AG04450 (cell line): ENCODE measurements at regions of chr9 and their contacts with region 1.

Region 1: DNA sequence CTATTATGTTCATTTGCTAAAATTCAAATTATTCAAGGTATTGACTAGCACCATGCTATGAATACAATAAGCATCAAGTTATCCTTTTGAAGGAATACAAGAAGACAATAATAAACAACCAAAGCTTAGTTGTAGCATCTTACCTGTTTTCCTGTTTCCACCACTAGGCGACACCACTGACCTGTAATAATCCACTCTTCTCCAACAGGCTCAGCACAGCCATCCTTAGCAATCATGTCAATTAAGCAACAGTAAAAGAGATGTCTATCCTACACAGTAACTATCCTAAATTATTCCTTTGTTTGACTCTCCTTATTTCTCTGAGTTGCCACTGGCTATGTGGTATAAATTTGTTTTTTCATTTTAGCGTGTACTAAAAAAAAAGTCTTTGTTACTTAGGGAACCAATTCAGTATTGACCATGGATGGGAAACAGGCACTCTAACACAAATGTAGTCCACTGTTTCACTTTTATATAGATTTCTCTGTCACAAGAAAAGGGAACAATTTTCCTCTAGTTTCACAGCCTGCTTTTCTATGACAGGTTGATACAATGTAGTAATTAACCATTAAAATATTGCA is 46.2 kb downstream of the PCA3 start:
- DNase-seq: peak; percentile 38
- H3K4me3 ChIP-seq: no peak overlapping the region
- H3K27ac ChIP-seq: no peak overlapping the region
- H3K27me3 ChIP-seq: no peaks in the 10 kb centered on the region
- CTCF ChIP-seq: peak; percentile 95

Region 2: GRCh38 chr9:75624998-75625397 is 1185.5 kb before region 1 on chr9:
- CTCF ChIA-PET with region 1: no interaction called
- POLR2A ChIA-PET with region 1: no interaction called
- DNase-seq: no peak
- H3K4me3 ChIP-seq: no peak overlapping the region
- H3K27ac ChIP-seq: no peak overlapping the region
- H3K27me3 ChIP-seq: no peaks in the 10 kb centered on the region
- CTCF ChIP-seq: no peak

Region 3: DNA sequence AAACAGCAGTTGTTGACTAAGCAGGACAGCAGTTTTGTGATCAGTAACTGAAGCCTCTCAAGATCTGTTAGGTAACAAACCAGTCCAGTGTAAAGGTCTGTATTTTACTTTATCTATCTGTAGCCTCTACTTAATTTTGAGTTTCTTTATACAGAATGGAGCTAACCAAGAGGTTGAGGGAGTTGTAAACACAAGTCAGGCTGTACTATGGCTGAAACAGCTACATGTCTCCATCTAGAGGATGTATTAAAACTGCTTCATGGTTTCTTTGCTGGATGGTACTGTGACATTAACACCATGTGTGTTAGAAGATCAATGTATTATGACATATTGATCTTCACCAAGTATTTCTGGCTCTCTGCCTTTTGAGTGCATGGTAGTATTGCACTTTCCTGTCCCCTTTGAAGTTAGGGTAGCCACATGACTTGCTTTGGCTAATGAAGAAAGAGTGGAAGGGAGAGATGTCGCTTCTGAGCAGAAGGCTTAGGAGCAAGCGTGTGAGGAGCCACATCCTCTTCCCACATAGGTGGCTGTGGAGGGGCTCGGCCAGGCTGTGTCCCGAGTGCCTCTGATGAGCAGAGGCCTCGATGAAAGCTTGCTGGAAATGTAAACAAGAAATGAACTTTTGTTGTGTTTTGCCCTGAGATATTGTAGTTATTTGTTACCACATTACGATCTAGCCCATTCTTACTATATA is 151.8 kb before region 1 on chr9:
- CTCF ChIA-PET with region 1: no interaction called
- POLR2A ChIA-PET with region 1: no interaction called
- DNase-seq: peak; percentile 43
- H3K4me3 ChIP-seq: no peak overlapping the region
- H3K27ac ChIP-seq: no peak overlapping the region
- H3K27me3 ChIP-seq: no peaks in the 10 kb centered on the region
- CTCF ChIP-seq: peak; percentile 79

Region 4: DNA sequence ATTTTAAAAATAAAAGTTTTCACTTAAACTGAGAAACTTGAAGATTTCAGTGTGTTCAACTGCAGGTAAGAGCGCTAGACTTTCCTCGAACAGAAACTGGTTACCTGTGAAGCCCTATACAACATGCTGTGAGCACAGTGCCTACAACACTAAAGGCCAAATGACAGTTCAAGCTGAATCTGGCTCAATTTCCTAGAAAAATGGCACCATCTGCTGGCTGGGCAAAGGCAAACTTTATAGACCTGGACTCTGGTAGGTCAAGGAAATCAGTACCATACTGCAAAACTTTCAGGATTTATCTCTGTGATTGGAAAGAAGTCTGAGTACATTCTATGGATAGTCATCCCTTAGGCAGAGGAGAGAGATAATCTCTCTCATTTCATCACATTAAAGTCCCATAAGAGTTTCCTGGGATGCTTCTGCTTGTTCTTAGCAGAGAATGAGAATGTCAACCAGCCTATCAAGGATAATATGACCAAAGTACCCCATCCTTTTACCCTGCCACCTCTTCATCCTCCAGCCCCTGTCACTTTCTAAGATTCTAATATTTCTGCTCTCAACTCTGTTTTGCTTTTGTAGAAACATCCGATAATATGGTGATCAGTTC is 177.2 kb after region 1 on chr9:
- CTCF ChIA-PET with region 1: interaction called, 110 read pairs
- POLR2A ChIA-PET with region 1: no interaction called
- DNase-seq: no peak
- H3K4me3 ChIP-seq: no peak overlapping the region
- H3K27ac ChIP-seq: no peak overlapping the region
- H3K27me3 ChIP-seq: no peaks in the 10 kb centered on the region
- CTCF ChIP-seq: peak; percentile 72

Region 5: GRCh38 chr9:76996700-76997099 is 186.2 kb after region 1 on chr9:
- CTCF ChIA-PET with region 1: interaction called, 94 read pairs
- POLR2A ChIA-PET with region 1: no interaction called
- DNase-seq: no peak
- H3K4me3 ChIP-seq: no peak overlapping the region
- H3K27ac ChIP-seq: no peak overlapping the region
- H3K27me3 ChIP-seq: peaks cover 2% of the 10 kb centered on the region
- CTCF ChIP-seq: peak; percentile 59

Region 6: DNA sequence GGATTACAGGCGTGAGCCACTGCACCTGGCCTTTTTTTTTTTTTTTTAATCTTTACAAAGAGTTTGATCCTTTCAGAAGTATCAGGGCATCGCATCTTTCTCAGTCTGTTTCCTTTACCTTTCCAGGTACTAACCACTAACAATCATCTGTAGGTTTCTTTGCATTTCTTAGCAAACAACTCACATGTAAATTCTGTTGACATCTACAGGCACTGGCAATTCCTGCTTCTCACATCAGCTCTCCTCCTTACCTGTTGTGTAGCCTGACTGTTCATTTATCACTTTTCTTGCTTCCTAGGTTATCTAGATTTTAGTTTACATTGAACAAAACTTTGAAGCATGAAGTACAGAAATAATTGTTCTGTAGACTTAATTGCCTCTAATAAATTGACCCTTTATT is 339.4 kb after region 1 on chr9:
- CTCF ChIA-PET with region 1: interaction called, 36 read pairs
- POLR2A ChIA-PET with region 1: no interaction called
- DNase-seq: no peak
- H3K4me3 ChIP-seq: no peak overlapping the region
- H3K27ac ChIP-seq: no peak overlapping the region
- H3K27me3 ChIP-seq: peaks cover 3% of the 10 kb centered on the region
- CTCF ChIP-seq: no peak